ENCODE measurements at regions of chr2 and their contacts with region 1.

Region 1: GRCh38 chr2:32168513-32168912 is 2.8 kb downstream of the SLC30A6 start:
- DNase-seq: no peak
- ATAC-seq: no peak
- H3K4me3 ChIP-seq: no peak overlapping the region
- H3K27ac ChIP-seq: no peak overlapping the region
- H3K4me1 ChIP-seq: peaks cover 4 to 11% of the 10 kb centered on the region in 2 experiments; a peak in 1 of 4 replicates
- H3K27me3 ChIP-seq: no peaks in the 10 kb centered on the region
- CTCF ChIP-seq: no peak
- POLR2A ChIP-seq: no peak
- RAD21 ChIP-seq: no peak

Region 2: GRCh38 chr2:32010670-32011484 is 157.6 kb before region 1 on chr2 and contains the start of gene MEMO1:
- CTCF ChIA-PET with region 1: no interaction called
- POLR2A ChIA-PET with region 1: no interaction called
- RAD21 ChIA-PET with region 1: no interaction called
- intact Hi-C with region 1: loop called (anchors 10 kb)
- DNase-seq: peak; percentile 83
- ATAC-seq: peak; percentile 76
- H3K4me3 ChIP-seq: peak within 1 kb of the TSS; percentile 81 to 93
- H3K27ac ChIP-seq: peak within 1 kb of the TSS; percentile 97
- H3K4me1 ChIP-seq: peaks cover 13 to 29% of the 10 kb centered on the region in 2 experiments; a peak in 3 of 4 replicates
- H3K27me3 ChIP-seq: no peaks in the 10 kb centered on the region
- CTCF ChIP-seq: no peak
- POLR2A ChIP-seq: peak; percentile 89
- RAD21 ChIP-seq: peak; percentile 32
- total RNA-seq, gene MEMO1: 44.7 TPM

Measured in HCT116 (cell line).